ENCODE measurements at regions of chr7 and their contacts with region 1.

Region 1: GRCh38 chr7:48088559-48089045 is 463 bp upstream of the UPP1 start:
- DNase-seq: no peak
- H3K4me3 Mint-ChIP-seq: peak overlapping the region; percentile 71
- H3K27ac Mint-ChIP-seq: peak overlapping the region; percentile 91
- H3K4me1 Mint-ChIP-seq: peaks cover 65% of the 10 kb centered on the region
- H3K27me3 Mint-ChIP-seq: no peaks in the 10 kb centered on the region

Region 2: GRCh38 chr7:47873762-47874161 is 214.8 kb before region 1 on chr7:
- intact Hi-C with region 1: loop called (anchors 5 kb)
- DNase-seq: no peak
- H3K4me3 Mint-ChIP-seq: no peak overlapping the region
- H3K27ac Mint-ChIP-seq: no peak overlapping the region
- H3K4me1 Mint-ChIP-seq: peaks cover 33% of the 10 kb centered on the region
- H3K27me3 Mint-ChIP-seq: no peaks in the 10 kb centered on the region

Region 3: GRCh38 chr7:47991741-47992311 is 96.8 kb before region 1 on chr7:
- intact Hi-C with region 1: loop called (anchors 1 kb)
- DNase-seq: peak; percentile 84
- H3K4me3 Mint-ChIP-seq: peak overlapping the region; percentile 85
- H3K27ac Mint-ChIP-seq: peak overlapping the region; percentile 89
- H3K4me1 Mint-ChIP-seq: peaks cover 20% of the 10 kb centered on the region
- H3K27me3 Mint-ChIP-seq: peaks cover 1% of the 10 kb centered on the region

Region 4: DNA sequence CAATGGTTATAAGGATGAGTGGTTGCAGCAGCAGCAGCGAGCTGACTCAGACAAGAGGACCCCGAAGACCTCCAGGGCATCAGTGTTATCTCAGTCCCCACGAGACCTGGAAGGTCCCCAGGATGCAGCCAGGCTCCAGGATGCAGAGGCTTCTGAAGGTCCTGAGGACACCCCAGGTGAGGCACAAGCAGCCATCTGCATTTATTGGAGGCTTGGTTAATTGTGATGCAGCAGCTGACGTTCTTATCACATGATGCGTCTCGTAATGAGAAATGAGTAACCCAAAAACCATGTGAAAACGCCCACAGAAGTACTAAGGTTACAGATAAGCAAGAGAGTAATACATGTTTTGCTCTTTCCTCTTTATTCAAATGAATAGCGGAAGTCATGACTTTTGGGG is 35.9 kb before region 1 on chr7:
- intact Hi-C with region 1: loop called (anchors 1 kb)
- DNase-seq: no peak
- H3K4me3 Mint-ChIP-seq: no peak overlapping the region
- H3K27ac Mint-ChIP-seq: no peak overlapping the region
- H3K4me1 Mint-ChIP-seq: peaks cover 11% of the 10 kb centered on the region
- H3K27me3 Mint-ChIP-seq: peaks cover 2% of the 10 kb centered on the region

Region 5: DNA sequence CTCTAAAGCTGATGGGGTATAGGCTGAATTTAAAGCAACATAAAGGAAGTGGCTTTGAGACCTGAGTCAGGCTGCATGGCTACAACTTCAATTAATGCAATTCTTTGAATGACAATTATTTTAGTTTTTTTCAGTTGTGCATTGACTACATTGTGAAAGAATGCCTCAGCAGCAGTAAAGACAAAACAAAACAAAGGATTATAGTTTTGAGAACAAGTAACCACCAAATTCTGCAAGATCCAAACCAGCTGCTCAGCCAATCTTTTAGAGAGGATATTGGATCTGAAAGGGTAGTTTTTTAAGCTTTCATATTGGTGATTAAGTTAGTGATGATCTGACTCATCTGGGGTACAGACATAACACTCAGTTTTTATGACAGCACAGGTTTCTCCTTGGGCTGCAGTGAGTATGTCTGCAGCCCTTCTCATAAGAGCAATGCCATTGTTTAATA is 42.1 kb after region 1 on chr7:
- intact Hi-C with region 1: loop called (anchors 5 kb)
- DNase-seq: no peak
- H3K4me3 Mint-ChIP-seq: no peak overlapping the region
- H3K27ac Mint-ChIP-seq: no peak overlapping the region
- H3K4me1 Mint-ChIP-seq: peaks cover 10% of the 10 kb centered on the region
- H3K27me3 Mint-ChIP-seq: peaks cover 17% of the 10 kb centered on the region

Region 6: GRCh38 chr7:48274662-48275061 is 186.1 kb after region 1 on chr7:
- intact Hi-C with region 1: loop called (anchors 5 kb)
- DNase-seq: no peak
- H3K4me3 Mint-ChIP-seq: no peak overlapping the region
- H3K27ac Mint-ChIP-seq: no peak overlapping the region
- H3K4me1 Mint-ChIP-seq: peaks cover 28% of the 10 kb centered on the region
- H3K27me3 Mint-ChIP-seq: peaks cover 5% of the 10 kb centered on the region